Activated CD4-positive, alpha-beta T cell treated with anti-CD3 and anti-CD28 coated beads for 36 hours (primary cell): ENCODE measurements at regions of chr16 and their contacts with region 1.

Region 1: GRCh38 chr16:30378236-30379204 is 3.8 kb downstream of the SEPTIN1 start:
- DNase-seq: peak; percentile 100
- ATAC-seq: peak; percentile 87
- H3K4me3 Mint-ChIP-seq: peak overlapping the region; percentile 99
- H3K27ac Mint-ChIP-seq: peak overlapping the region; percentile 99
- H3K4me1 Mint-ChIP-seq: peaks cover 44% of the 10 kb centered on the region
- H3K27me3 Mint-ChIP-seq: no peaks in the 10 kb centered on the region

Region 2: DNA sequence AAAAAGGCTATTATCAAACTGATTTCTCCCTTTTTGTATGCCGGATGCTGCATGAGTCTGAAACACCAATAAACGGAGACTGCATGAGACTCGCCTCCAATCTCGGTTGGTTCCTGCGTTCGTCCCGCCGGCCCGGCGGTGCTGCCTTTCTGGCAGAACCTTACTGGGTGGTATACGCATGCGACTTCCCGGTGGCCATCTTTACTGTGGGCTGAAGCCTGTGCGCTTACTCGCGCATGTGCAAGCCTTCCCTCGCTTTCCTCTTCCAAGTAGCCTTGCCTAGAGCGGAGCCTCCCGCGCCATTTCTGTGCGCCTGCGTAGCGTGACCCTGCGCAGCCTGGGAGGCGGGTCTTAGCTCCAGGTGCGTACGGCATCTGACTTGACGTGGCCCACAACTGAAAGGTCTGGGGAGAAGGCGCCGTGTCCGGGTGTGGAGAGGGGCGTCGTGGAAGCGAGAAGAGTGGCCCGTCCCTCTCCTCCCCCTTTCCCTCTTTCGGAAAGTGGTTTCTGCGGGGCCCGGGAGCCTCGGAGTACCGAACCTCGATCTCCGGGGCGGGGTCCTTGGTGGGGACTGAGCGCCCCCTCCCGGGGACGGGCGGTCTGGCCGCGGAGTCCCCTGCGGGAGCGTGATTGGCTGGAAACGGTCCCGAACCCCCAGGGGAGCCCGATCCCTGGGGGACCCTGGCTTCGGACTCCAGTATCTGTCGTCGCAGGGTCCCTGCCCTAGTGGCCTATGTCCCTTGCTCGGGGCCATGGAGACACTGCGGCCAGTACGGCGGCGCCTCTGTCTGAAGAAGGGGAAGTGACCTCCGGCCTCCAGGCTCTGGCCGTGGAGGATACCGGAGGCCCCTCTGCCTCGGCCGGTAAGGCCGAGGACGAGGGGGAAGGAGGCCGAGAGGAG is 562.5 kb before region 1 on chr16 and contains the start of gene PAGR1:
- CTCF ChIA-PET with region 1: no interaction called
- POLR2A ChIA-PET with region 1: no interaction called
- intact Hi-C with region 1: loop called in 1 of 2 experiments (anchors 2 kb)
- DNase-seq: peak; percentile 99
- ATAC-seq: peak; percentile 72
- H3K4me3 Mint-ChIP-seq: peak within 1 kb of the TSS; percentile 84
- H3K27ac Mint-ChIP-seq: peak within 1 kb of the TSS; percentile 97
- H3K4me1 Mint-ChIP-seq: peaks cover 57% of the 10 kb centered on the region
- H3K27me3 Mint-ChIP-seq: no peaks in the 10 kb centered on the region
- total RNA-seq, gene PAGR1: 20.6 to 25.6 TPM

Region 3: DNA sequence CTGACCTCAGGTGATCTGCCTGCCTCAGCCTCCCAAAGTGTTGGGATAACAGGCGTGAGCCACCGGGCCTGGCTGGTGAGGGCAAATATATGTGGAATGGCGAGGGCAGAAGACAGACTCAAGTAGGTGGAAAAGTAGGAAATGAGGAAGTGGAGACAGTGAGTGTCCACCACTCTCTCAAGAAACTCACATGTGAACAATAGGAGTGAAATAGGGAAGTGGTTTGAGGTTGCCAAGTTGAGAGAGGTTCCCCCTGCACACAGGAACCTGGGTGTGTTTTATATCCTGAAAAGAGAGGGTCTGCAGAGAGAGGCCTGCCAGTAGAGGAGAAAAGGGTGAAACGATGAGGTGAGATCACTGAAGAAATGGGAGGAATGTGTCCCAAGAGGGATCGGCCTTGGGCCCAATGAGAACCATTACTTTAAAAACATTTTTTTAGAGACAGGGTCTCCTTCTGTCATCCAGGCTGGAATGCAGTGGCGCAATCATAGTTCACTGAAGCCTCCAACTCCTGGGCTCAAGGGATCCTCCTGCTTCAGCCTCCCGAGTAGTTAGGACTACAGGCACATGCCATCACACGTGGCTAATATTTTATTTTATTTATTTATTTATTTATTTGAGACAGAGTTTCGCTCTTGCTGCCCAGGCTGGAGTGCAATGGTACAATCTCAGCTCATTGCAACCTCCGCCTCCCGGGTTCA is 212.2 kb before region 1 on chr16:
- CTCF ChIA-PET with region 1: no interaction called
- POLR2A ChIA-PET with region 1: no interaction called
- intact Hi-C with region 1: no loop called
- DNase-seq: no peak
- ATAC-seq: peak; percentile 39
- H3K4me3 Mint-ChIP-seq: no peak overlapping the region
- H3K27ac Mint-ChIP-seq: no peak overlapping the region
- H3K4me1 Mint-ChIP-seq: peaks cover 19% of the 10 kb centered on the region
- H3K27me3 Mint-ChIP-seq: no peaks in the 10 kb centered on the region

Region 4: DNA sequence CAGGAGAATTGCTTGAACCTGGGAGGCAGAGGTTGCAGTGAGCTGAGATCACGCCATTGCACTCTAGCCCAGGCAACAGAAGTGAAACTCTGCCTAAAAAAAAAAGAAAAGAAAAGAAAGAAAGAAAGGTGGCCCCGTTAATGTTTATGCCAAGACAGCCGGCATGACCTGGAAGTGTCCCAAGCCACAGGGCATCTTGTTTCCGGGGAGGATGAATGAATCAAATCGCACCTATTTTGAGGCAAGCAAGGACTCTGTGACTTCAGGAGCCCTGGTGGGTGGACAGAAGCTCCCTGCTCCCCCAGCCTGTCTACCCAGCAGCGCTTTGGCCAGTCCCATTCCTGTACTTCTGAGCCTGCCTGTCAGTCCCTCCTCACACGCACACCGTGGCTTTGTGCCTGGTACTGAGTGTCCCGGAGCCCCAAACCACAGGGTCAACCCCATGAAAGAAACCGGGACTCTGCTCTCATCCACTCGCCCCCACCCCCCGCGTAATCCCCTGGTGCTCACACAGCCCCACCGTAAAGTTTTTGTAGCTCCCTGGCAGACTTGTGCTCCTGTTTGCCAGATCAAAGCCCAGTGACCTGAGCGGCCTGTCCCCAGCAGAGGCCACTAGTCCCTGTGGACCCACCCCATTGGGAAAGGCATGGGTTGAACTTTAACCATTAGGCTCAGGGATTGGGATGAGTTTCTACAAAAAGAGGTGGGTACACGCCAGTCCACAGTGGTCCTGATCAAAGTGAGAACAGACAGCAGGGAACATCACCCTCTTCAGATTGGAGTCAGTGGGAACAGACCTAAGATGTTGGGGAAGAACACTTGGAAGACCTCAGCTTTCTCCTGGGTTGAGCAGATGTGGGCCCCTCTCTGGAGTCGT is 42.7 kb before region 1 on chr16:
- CTCF ChIA-PET with region 1: interaction called, 3 read pairs
- POLR2A ChIA-PET with region 1: no interaction called
- intact Hi-C with region 1: loop called in 1 of 2 experiments (anchors 1 kb)
- DNase-seq: peak; percentile 55
- ATAC-seq: peak; percentile 13
- H3K4me3 Mint-ChIP-seq: peak overlapping the region; percentile 87
- H3K27ac Mint-ChIP-seq: peak overlapping the region; percentile 73
- H3K4me1 Mint-ChIP-seq: peaks cover 22% of the 10 kb centered on the region
- H3K27me3 Mint-ChIP-seq: no peaks in the 10 kb centered on the region

Region 5: GRCh38 chr16:30355144-30355894 is 23.2 kb before region 1 on chr16 and contains the start of gene CD2BP2:
- CTCF ChIA-PET with region 1: interaction called, 3 read pairs
- POLR2A ChIA-PET with region 1: interaction called, 4 read pairs
- intact Hi-C with region 1: loop called in 1 of 2 experiments (anchors 1 kb)
- DNase-seq: peak; percentile 94
- ATAC-seq: peak; percentile 88
- H3K4me3 Mint-ChIP-seq: peak within 1 kb of the TSS; percentile 90
- H3K27ac Mint-ChIP-seq: peak within 1 kb of the TSS; percentile 94
- H3K4me1 Mint-ChIP-seq: peaks cover 32% of the 10 kb centered on the region
- H3K27me3 Mint-ChIP-seq: no peaks in the 10 kb centered on the region
- total RNA-seq, gene CD2BP2: 42.3 to 51.8 TPM

Region 6: DNA sequence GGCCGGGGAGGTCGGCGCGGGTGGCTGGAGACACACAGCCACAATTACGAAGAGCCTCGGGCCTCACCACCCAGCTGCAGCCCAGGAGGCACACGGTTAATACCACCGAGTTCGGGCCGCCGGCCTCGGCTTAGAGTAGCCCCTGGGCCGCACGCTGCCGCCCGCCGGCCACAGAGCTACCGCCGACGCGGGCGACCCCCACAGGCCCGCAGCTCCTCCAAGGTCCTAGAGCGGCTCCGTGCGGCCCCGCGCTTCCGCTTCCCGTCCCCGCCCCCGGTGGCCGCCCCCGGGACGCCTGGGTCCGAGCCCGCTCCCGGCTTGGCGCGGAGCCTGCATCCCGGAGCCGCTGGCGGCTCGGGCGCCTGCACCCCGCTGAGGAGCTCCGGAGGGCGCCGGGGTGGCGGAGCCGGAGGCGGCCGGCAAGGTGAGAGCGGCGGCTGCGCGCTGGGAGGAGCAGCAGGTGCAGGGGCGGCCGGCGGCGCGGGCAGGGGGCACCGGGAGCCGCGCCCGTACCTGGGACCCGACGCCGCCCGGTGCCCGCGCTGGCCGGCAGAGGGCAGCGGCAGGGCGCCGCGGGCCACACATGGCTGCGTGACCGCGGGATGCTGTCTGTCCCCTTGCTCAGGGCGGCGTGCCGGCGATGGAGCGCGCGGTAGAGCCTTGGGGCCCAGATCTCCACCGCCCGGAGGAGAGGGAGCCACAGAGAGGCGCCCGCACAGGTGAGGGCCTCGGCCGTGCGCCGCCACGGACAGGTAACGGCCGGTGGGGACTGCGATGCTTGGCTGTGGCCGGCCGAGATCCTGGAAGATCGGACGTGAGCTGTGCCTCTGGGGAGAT is 16.9 kb after region 1 on chr16 and contains the start of gene ZNF48:
- CTCF ChIA-PET with region 1: interaction called, 18 read pairs
- POLR2A ChIA-PET with region 1: interaction called, 3 read pairs
- intact Hi-C with region 1: loop called (anchors 1 to 2 kb)
- DNase-seq: peak; percentile 67
- ATAC-seq: peak; percentile 61
- H3K4me3 Mint-ChIP-seq: peak within 1 kb of the TSS; percentile 81
- H3K27ac Mint-ChIP-seq: peak within 1 kb of the TSS; percentile 48
- H3K4me1 Mint-ChIP-seq: peaks cover 28% of the 10 kb centered on the region
- H3K27me3 Mint-ChIP-seq: no peaks in the 10 kb centered on the region
- total RNA-seq, gene ZNF48: 10.6 to 11.0 TPM

Region 7: DNA sequence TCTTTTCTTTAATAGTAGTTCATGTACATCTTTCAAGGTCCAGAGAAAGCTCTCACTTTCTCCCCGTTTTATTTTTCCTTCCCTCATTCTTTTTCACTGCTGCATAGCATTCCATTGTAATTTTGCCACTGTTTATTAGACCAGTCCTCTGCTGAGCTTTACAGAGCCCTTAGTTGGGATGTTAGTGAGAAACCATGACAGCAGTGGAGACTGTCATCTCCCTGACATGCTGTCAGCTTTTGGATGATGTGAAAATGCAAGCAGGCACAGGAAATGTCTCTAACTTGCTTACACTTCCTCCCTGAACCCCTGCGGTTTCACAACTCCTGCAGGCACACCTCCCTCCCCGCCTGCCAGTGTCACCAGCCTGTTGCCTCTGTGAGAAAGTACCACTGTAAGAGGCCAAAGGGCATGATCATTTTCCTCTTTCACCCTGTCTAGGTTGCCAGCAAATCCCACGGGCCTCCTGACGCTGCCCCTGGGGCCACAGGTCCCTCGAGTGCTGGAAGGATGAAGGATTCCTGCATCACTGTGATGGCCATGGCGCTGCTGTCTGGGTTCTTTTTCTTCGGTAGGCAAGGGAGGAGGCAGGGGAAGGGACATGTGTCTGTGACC is 93.9 kb after region 1 on chr16 and contains the start of gene ITGAL:
- CTCF ChIA-PET with region 1: interaction called, 4 read pairs
- POLR2A ChIA-PET with region 1: no interaction called
- intact Hi-C with region 1: loop called (anchors 2 to 5 kb)
- DNase-seq: peak; percentile 93
- ATAC-seq: peak; percentile 62
- H3K4me3 Mint-ChIP-seq: peak within 1 kb of the TSS; percentile 95
- H3K27ac Mint-ChIP-seq: peak within 1 kb of the TSS; percentile 99
- H3K4me1 Mint-ChIP-seq: peaks cover 63% of the 10 kb centered on the region
- H3K27me3 Mint-ChIP-seq: no peaks in the 10 kb centered on the region
- total RNA-seq, gene ITGAL: 210 to 222 TPM

Region 8: GRCh38 chr16:30615358-30616091 is 237.0 kb after region 1 on chr16:
- CTCF ChIA-PET with region 1: interaction called, 10 read pairs
- POLR2A ChIA-PET with region 1: no interaction called
- intact Hi-C with region 1: no loop called
- DNase-seq: peak; percentile 94
- ATAC-seq: peak; percentile 89
- H3K4me3 Mint-ChIP-seq: no peak overlapping the region
- H3K27ac Mint-ChIP-seq: no peak overlapping the region
- H3K4me1 Mint-ChIP-seq: peaks cover 4% of the 10 kb centered on the region
- H3K27me3 Mint-ChIP-seq: no peaks in the 10 kb centered on the region